HEK293T (cell line): ENCODE measurements at regions of chr14 and their contacts with region 1.

Region 1: GRCh38 chr14:68843471-68844209 is 50.8 kb upstream of the ZFP36L1 start:
- DNase-seq: peak; percentile 85

Region 2: GRCh38 chr14:68676511-68676943 is 167.1 kb before region 1 on chr14:
- CTCF ChIA-PET with region 1: no interaction called
- POLR2A ChIA-PET with region 1: no interaction called
- DNase-seq: no peak

Region 3: DNA sequence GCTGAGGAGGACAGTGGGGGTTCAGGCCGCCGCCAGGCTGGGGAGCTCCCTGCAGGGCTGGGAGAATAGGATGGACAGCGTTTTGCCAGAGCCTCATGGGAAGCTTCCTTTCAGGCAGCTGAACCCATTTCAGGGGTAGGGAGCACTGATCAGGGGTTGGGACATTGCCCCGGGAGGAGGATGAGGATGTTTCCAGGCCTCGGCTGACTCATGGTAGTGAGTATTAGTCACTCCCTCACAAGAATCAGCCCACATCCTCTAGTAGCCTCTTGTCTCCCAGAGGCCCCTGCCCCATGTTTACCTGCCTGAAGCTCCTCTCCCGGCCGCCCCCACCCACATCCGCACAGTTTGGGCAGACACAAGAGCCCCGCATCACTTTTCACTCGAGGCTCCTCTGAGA is 140.5 kb before region 1 on chr14:
- CTCF ChIA-PET with region 1: no interaction called
- POLR2A ChIA-PET with region 1: no interaction called
- DNase-seq: no peak

Region 4: GRCh38 chr14:68824517-68825347 is 18.9 kb before region 1 on chr14:
- CTCF ChIA-PET with region 1: interaction called, 19 read pairs
- POLR2A ChIA-PET with region 1: no interaction called
- DNase-seq: peak; percentile 91

Region 5: GRCh38 chr14:69005432-69006147 is 161.9 kb after region 1 on chr14:
- CTCF ChIA-PET with region 1: interaction called, 12 read pairs
- POLR2A ChIA-PET with region 1: no interaction called
- DNase-seq: no peak